ENCODE measurements at regions of chr5 and their contacts with region 1.

Region 1: DNA sequence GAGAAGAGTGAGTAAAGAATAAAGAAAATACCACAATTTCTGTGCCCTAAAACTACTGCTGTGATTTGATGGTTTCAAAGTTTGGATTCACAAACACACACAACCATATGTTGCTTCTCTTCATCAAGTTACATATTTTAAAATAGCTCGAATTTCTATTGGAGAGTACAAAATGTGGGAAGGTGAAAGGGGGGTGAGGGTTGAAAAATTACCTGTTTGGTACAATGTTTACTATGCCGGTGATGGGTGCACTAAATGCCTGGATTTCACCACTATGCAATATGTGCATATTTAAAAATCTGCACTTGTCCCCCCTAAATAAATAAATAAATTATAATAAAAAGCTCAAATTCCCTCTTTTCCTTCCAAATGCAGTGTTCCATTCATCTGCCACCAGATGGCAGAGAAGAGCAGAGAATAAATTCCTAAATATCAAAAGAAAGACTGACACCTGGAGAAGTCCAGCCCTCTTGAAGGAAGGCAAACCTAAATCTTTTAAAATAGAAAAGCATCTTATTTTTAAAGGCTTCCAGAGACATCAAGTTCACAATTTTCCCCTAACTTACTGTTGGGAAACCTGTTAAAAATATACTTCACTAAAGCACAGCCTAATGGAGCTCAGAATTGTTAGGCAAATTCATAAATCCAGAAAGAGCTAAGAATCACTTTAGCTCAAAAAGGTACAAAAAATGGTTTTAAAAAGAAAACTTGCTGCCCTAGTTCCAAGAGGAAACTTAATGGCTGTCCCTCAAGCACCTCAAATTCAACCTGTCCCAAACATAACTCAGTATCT is 24.8 kb upstream of the HNRNPA0 start:
- DNase-seq: no peak

Region 2: DNA sequence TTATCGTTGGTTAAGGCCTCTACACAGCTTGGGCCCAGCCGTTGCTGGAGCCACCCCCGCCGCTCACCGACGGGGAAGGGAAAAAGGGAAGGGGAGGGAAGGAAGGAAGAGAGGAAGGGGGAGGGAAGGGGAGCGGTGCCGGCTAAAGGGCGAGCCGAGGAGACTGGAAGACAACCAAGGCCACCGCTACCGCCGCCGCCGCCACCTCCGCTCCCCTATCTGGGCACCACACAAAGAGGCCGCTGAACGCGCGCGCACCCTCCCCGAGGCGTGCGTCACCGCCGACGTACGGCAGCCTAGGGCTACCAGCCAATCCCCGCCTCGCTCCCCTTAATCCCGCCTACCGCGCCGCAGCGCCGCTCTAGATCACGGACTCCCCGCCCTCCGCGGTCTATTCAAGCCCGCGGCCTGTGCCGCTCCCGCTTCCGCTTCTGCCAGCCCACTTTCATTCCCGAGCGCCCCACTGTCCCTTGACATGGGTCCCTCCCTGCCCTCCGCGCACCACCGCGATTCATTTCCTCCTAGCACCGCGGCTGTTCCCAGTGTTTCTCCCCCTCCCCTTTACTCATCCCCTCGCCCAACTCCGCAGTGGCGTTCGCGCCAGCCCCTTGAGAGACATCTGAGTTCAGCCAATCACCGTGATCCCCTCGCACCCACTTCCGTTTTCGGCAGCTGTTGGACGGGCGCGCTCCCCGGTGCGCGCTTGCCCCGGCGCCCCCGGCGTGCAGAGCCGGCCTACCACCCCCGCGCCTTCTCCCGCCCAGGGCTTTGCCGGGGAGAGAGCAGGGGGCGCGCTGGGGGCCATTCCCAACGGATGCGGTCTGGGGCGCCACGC is 24.6 kb before region 1 on chr5 and contains the start of gene HNRNPA0:
- intact Hi-C with region 1: no loop called
- DNase-seq: peak; percentile 98
- total RNA-seq, gene HNRNPA0: 20.0 TPM

Region 3: DNA sequence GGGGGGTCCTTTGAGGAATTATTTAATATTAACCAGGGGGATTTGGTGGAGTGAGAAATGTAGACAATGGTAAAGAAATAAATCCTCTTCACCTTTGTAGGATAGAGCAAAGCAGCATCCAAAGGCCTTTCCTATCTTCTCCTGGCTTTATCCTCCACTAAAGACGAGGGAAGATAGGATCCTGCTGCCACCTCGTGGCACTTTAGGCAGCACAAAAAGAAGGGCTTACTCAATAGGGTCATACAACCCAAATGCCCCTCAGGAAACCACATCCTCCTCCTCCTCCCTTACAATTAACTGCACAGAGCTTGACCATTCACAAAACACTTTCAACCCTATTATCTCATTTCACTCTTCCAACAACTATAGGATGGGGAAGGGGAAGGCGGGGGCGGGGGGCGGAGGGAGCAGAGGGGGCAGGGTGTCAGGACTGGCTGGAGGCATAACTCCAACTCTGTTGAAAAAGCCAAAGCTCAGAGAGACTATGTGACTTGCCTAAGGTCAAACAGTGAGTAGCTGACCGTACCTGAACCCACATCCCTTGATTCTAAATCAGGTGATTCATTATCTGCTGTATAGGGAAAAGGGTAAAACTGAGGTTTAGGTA is 43.3 kb after region 1 on chr5:
- intact Hi-C with region 1: loop called (anchors 5 kb)
- DNase-seq: no peak

Region 4: DNA sequence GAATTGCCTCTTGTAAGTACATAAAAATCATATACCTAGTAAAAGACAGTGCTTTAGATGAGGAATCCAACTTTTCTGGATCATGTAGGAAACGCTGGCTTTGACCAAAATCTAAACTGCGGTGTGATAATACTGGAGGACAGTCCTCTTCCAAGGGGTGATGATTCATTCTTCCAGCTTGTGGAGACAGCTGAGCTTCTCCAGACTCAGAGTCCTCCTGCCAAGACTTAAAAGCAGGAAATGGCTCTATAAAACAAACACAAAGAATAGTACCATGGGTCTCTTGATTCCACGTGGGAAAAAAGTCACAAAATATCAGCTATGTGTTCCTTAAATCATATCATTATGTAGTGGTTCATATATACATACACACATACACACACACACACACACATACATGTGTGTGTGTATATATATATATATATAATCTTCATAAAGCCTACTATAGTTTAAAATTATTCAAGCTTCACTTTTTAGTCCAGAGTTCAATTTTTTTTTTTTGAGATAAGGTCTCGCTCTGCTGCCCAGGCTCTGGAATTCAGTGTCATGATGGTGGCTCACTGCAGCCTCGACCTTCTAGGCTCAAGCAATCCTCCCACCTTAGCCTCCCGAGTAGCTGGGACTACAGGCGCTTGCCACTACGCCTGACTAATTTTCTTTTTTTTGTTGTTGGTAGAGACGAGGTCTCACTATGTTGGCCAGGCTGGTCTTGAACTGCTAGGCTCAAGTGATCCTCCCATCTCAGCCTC is 175.3 kb after region 1 on chr5:
- intact Hi-C with region 1: no loop called
- DNase-seq: no peak

Region 5: GRCh38 chr5:138065102-138065501 is 286.1 kb after region 1 on chr5:
- intact Hi-C with region 1: loop called (anchors 5 kb)
- DNase-seq: no peak

Region 6: DNA sequence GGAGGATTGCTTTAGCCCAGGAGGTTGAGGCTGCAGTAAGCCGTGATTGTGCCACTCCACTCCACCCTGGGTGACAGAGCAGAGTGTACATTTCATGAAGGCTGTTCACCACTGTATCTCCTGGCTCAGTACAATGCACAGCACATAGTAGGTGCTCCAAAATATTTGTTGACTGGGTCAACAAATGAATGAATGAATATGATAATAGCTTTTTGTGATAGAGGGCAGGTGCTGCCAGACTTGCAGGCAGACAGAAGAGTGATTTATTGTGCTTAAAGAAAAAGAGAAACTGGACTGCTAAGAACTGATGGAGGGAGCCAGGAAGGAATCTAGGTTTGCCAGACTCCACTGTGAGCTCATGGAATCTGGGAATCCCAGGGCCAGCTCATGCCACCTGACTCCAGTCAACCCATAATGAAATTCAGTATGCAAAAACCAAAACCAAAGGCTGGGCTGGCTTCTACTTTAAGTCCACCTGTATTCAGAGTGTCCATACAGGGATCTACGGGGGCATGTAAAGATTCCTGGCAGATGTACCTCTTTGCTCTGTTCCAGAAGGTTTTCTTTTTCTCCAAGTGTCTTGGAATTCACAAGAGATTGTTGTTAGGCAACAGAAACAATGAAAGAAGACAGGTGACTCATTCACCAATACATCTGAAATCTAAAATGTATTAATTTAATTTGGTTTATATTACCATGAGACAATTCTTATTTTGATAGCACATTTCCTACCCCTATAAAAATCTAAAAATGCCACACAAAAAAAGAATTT is 958.7 kb after region 1 on chr5:
- intact Hi-C with region 1: no loop called
- DNase-seq: no peak

Measured in cardiac septum (tissue), 1 donor.